ENCODE measurements at regions of chr9 and their contacts with region 1.

Region 1: DNA sequence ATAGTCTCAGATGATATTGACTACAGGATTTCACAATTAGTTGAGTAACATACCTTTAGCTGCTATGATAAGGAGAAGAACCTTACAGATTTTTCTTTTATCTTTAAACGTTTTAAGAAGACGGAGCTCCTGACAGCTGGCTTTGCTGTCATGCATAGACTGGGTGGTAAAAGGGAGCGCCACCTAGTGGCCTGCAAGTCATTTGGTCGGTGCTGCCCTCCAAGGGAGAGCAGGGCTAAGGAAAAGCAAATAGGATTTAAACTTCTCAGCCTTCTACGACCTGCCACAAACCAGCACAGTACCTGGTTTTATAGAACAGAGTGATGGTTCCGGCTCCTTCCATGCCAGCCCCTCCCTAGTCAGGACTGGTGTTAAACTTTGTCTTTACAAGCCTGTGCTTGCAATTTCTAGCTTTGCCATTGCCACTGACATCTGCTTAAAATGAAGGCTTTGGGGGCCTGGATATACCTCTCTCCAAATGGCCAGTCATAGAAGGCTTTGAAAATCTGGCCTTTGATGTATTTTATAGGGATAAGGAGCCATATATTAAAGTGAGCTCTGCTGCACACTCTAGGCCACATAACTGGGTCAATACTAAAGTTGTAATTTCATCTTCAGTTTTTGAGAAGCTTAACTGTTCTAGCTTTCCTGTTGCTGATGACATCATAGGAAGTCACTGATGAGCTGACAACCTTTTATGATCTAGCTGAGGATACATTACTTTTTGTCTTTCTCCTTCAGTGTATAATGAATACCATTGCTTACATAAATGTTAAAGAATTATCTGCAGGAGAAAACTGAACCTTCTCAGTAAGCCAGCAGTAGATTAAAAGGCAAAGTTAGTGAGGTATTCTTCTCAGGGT is 31.1 kb upstream of the ADAMTSL1 start:
- DNase-seq: peak; percentile 68
- ATAC-seq: peak; percentile 84
- H3K4me3 Mint-ChIP-seq: no peak overlapping the region
- H3K27ac Mint-ChIP-seq: no peak overlapping the region
- H3K4me1 Mint-ChIP-seq: no peaks in the 10 kb centered on the region
- H3K27me3 Mint-ChIP-seq: peaks cover 15% of the 10 kb centered on the region

Region 2: GRCh38 chr9:18457510-18457909 is 14.7 kb after region 1 on chr9:
- CTCF ChIA-PET with region 1: interaction called, 13 read pairs
- POLR2A ChIA-PET with region 1: no interaction called
- DNase-seq: no peak
- ATAC-seq: no peak
- H3K4me3 Mint-ChIP-seq: no peak overlapping the region
- H3K27ac Mint-ChIP-seq: no peak overlapping the region
- H3K4me1 Mint-ChIP-seq: no peaks in the 10 kb centered on the region
- H3K27me3 Mint-ChIP-seq: no peaks in the 10 kb centered on the region